Natural killer cell (primary cell): ENCODE measurements at regions of chr12 and their contacts with region 1.

Region 1: DNA sequence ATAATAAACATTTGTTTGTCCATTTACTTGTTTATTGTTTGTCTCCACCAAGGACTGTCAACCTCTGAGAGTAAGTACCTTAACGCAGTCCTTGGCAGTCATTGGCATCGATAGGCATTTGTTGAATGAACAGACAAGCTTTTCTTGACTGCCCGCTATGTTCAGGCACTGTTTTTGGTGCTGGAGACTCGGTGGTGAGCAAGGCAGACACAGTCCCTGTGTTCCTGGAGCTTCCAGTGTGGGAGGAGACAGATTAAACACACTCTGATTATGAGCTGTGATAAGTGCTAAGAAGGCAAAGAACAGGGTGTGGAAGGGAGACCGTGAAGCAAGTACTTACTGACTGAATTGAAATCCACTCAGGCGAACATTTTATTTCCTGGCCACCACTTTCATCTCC is 1.2 kb downstream of the ATP6V0A2 start:
- DNase-seq: peak in 1 of 2 donors; percentile 21
- ATAC-seq: no peak
- H3K4me3 ChIP-seq: no peak overlapping the region
- H3K4me3 Mint-ChIP-seq: peak overlapping the region; percentile 91
- H3K27ac ChIP-seq: no peak overlapping the region
- H3K27ac Mint-ChIP-seq: peak overlapping the region; percentile 78 to 88
- H3K4me1 ChIP-seq: peaks cover 24% of the 10 kb centered on the region
- H3K4me1 Mint-ChIP-seq: peaks cover 32 to 37% of the 10 kb centered on the region in 2 donors
- H3K27me3 ChIP-seq: no peaks in the 10 kb centered on the region
- H3K27me3 Mint-ChIP-seq: no peaks in the 10 kb centered on the region
- CTCF ChIP-seq: no peak

Region 2: GRCh38 chr12:123670882-123671728 is 42.3 kb before region 1 on chr12 and contains the start of gene TCTN2:
- intact Hi-C with region 1: loop called (anchors 5 kb)
- DNase-seq: peak; percentile 89 to 94
- ATAC-seq: peak; percentile 98 to 100 (median 100)
- H3K4me3 ChIP-seq: peak within 1 kb of the TSS; percentile 75
- H3K4me3 Mint-ChIP-seq: peak within 1 kb of the TSS; percentile 88
- H3K27ac ChIP-seq: no peak within 1 kb of the TSS
- H3K27ac Mint-ChIP-seq: peak within 1 kb of the TSS in 1 of 2 donors; percentile 66
- H3K4me1 ChIP-seq: peaks cover 12% of the 10 kb centered on the region
- H3K4me1 Mint-ChIP-seq: peaks cover 7 to 16% of the 10 kb centered on the region in 2 donors
- H3K27me3 ChIP-seq: no peaks in the 10 kb centered on the region
- H3K27me3 Mint-ChIP-seq: no peaks in the 10 kb centered on the region
- CTCF ChIP-seq: no peak
- total RNA-seq, gene TCTN2: 3.2 to 7.3 (median 4.6) TPM